A673 (cell line): ENCODE measurements at regions of chr3 and their contacts with region 1.

Region 1: GRCh38 chr3:197471221-197472010 is 84.4 kb downstream of the BDH1 start:
- DNase-seq: no peak
- H3K4me3 ChIP-seq: no peak overlapping the region
- H3K27ac ChIP-seq: no peak overlapping the region
- H3K4me1 ChIP-seq: peaks cover 28% of the 10 kb centered on the region
- H3K27me3 ChIP-seq: no peaks in the 10 kb centered on the region
- CTCF ChIP-seq: no peak

Region 2: GRCh38 chr3:197260491-197261163 is 210.8 kb before region 1 on chr3:
- CTCF ChIA-PET with region 1: no interaction called
- POLR2A ChIA-PET with region 1: no interaction called
- intact Hi-C with region 1: no loop called
- DNase-seq: peak; percentile 64
- H3K4me3 ChIP-seq: peak overlapping the region; percentile 1
- H3K27ac ChIP-seq: peak overlapping the region; percentile 68
- H3K4me1 ChIP-seq: peaks cover 55% of the 10 kb centered on the region
- H3K27me3 ChIP-seq: no peaks in the 10 kb centered on the region
- CTCF ChIP-seq: no peak

Region 3: GRCh38 chr3:197674741-197675562 is 203.5 kb after region 1 on chr3:
- CTCF ChIA-PET with region 1: no interaction called
- POLR2A ChIA-PET with region 1: no interaction called
- intact Hi-C with region 1: no loop called
- DNase-seq: no peak
- H3K4me3 ChIP-seq: no peak overlapping the region
- H3K27ac ChIP-seq: no peak overlapping the region
- H3K4me1 ChIP-seq: no peaks in the 10 kb centered on the region
- H3K27me3 ChIP-seq: no peaks in the 10 kb centered on the region
- CTCF ChIP-seq: no peak

Region 4: GRCh38 chr3:197833930-197834715 is 362.7 kb after region 1 on chr3:
- CTCF ChIA-PET with region 1: no interaction called
- POLR2A ChIA-PET with region 1: interaction called, 21 read pairs
- intact Hi-C with region 1: no loop called
- DNase-seq: no peak
- H3K4me3 ChIP-seq: no peak overlapping the region
- H3K27ac ChIP-seq: no peak overlapping the region
- H3K4me1 ChIP-seq: peaks cover 8% of the 10 kb centered on the region
- H3K27me3 ChIP-seq: no peaks in the 10 kb centered on the region
- CTCF ChIP-seq: no peak